ENCODE measurements at regions of chr2 and their contacts with region 1.

Region 1: GRCh38 chr2:31333527-31334183 is 80.9 kb downstream of the XDH start:
- DNase-seq: peak; percentile 62 to 69 (median 62)
- ATAC-seq: peak; percentile 91
- H3K4me3 ChIP-seq: no peak overlapping the region
- H3K27ac ChIP-seq: no peak overlapping the region
- H3K4me1 ChIP-seq: no peaks in the 10 kb centered on the region
- H3K27me3 ChIP-seq: peaks cover 2 to 18% of the 10 kb centered on the region in 2 experiments; a peak in 3 of 5 replicates
- CTCF ChIP-seq: peak; percentile 87 to 89 (median 88)
- EP300 ChIP-seq: no peak
- POLR2A ChIP-seq: no peak
- RAD21 ChIP-seq: peak; percentile 75 to 88

Region 2: GRCh38 chr2:30165050-30165520 is 1168.6 kb before region 1 on chr2:
- CTCF ChIA-PET with region 1: interaction called, 3 read pairs
- POLR2A ChIA-PET with region 1: no interaction called
- in situ Hi-C with region 1: loop called (anchors 25 kb)
- intact Hi-C with region 1: no loop called
- DNase-seq: peak; percentile 88 to 90 (median 90)
- ATAC-seq: peak; percentile 100
- H3K4me3 ChIP-seq: no peak overlapping the region
- H3K27ac ChIP-seq: no peak overlapping the region
- H3K4me1 ChIP-seq: no peaks in the 10 kb centered on the region
- H3K27me3 ChIP-seq: no peaks in the 10 kb centered on the region; a peak in 1 of 5 replicates
- CTCF ChIP-seq: peak; percentile 94 to 99 (median 98)
- EP300 ChIP-seq: 0 out of 2 replicates have a peak, but pooled peaks have one; percentile 32
- POLR2A ChIP-seq: no peak
- RAD21 ChIP-seq: peak; percentile 90 to 92

Region 3: DNA sequence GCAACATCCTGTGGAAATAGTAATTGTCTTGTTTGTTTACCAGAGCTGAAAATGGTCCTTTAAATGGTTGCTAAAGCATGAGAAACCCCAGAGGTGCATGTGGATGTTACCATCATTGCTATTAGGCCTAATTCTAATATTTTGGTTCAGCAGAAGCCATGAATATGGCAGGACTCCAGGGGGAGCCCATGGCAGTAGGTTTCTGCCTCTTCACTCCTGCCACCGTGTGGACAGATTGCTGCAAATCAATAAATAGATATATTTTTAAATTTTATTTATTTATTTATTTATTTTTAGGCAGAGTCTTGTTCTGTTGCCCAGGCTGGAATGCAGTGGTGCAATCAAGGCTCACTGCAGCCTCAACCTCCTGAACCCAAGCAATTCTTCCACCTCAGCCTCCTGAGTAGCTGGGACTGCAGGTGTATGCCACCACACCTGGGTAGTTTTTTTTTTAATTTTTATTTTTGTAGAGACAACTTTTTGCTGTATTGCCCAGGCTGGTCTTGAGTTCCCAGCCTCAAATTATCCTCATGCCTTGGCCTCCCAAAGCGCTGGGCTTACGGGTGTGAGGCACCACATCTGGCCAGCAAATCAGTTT is 471.5 kb before region 1 on chr2:
- CTCF ChIA-PET with region 1: interaction called, 6 read pairs
- POLR2A ChIA-PET with region 1: no interaction called
- in situ Hi-C with region 1: no loop called
- intact Hi-C with region 1: loop called (anchors 10 kb)
- DNase-seq: peak; percentile 41 to 72 (median 51)
- ATAC-seq: peak; percentile 81
- H3K4me3 ChIP-seq: no peak overlapping the region
- H3K27ac ChIP-seq: no peak overlapping the region
- H3K4me1 ChIP-seq: no peaks in the 10 kb centered on the region
- H3K27me3 ChIP-seq: peaks cover 2 to 5% of the 10 kb centered on the region in 2 experiments; a peak in 3 of 5 replicates
- CTCF ChIP-seq: peak; percentile 63 to 99 (median 99)
- EP300 ChIP-seq: no peak
- POLR2A ChIP-seq: no peak
- RAD21 ChIP-seq: peak; percentile 63 to 67

Region 4: DNA sequence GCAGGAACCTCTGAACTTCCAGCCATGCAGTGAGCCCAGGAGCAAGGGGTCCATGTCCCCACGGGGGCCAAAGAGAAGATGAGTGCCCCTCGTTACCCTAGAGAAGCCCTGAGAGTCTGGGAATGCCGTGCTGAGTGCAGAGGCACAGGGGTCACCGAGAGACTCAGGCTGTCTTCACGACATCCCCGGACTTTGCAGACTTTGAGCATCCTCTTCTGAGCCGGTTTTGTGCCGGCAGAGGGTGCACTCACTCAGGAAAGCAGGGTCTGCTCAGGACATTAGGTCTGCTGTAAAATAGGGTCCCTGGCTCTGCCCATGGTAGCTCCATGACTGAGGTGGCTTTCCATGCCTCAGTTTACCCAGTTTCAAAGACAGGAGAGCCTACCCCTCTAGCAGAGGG is 266.4 kb before region 1 on chr2:
- CTCF ChIA-PET with region 1: no interaction called
- POLR2A ChIA-PET with region 1: no interaction called
- in situ Hi-C with region 1: no loop called
- intact Hi-C with region 1: loop called (anchors 10 kb)
- DNase-seq: peak in 3 of 4 experiments; percentile 12 to 18 (median 17)
- ATAC-seq: peak; percentile 78
- H3K4me3 ChIP-seq: no peak overlapping the region
- H3K27ac ChIP-seq: no peak overlapping the region
- H3K4me1 ChIP-seq: no peaks in the 10 kb centered on the region
- H3K27me3 ChIP-seq: no peaks in the 10 kb centered on the region; a peak in 1 of 5 replicates
- CTCF ChIP-seq: peak; percentile 40 to 49 (median 43)
- EP300 ChIP-seq: no peak
- POLR2A ChIP-seq: no peak
- RAD21 ChIP-seq: peak in 1 of 2 experiments; percentile 28; a peak in 1 of 4 replicates

Region 5: DNA sequence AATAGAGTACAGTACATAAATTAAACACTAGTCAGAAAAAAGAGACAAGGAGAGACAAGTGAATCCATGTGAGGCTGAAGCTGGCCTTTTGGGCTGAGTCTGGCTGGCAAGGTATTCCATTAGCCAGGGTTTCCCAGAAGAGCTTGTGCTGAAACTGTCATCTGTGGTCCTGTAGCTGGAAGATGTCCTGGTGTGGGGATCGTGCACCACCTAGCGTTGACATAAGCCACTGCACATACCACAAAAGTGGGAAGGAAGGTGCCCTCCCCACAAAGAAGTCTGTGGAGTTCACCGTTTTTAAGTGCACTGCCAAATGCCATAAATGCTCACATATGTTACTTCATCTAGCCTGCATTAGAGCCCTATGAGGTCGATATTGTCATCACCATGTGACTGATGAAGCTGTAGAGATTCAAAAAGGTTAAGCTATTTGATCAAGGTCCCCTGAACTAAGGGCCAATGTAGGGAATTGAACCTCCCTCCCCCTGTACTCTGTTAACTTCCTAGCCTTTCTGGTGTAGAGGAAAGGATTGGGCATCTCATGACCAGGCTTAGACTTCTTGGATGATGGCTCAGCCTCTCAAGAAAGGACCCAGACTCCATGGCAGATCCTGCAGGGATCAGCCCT is 163.5 kb before region 1 on chr2:
- CTCF ChIA-PET with region 1: no interaction called
- POLR2A ChIA-PET with region 1: no interaction called
- in situ Hi-C with region 1: no loop called
- intact Hi-C with region 1: loop called (anchors 10 kb)
- DNase-seq: peak; percentile 69 to 77 (median 74)
- ATAC-seq: peak; percentile 98
- H3K4me3 ChIP-seq: no peak overlapping the region
- H3K27ac ChIP-seq: no peak overlapping the region
- H3K4me1 ChIP-seq: no peaks in the 10 kb centered on the region
- H3K27me3 ChIP-seq: peaks cover 0 to 3% of the 10 kb centered on the region in 2 experiments; a peak in 1 of 5 replicates
- CTCF ChIP-seq: peak; percentile 88 to 90 (median 88)
- EP300 ChIP-seq: no peak
- POLR2A ChIP-seq: no peak
- RAD21 ChIP-seq: peak; percentile 75 to 86

Region 6: DNA sequence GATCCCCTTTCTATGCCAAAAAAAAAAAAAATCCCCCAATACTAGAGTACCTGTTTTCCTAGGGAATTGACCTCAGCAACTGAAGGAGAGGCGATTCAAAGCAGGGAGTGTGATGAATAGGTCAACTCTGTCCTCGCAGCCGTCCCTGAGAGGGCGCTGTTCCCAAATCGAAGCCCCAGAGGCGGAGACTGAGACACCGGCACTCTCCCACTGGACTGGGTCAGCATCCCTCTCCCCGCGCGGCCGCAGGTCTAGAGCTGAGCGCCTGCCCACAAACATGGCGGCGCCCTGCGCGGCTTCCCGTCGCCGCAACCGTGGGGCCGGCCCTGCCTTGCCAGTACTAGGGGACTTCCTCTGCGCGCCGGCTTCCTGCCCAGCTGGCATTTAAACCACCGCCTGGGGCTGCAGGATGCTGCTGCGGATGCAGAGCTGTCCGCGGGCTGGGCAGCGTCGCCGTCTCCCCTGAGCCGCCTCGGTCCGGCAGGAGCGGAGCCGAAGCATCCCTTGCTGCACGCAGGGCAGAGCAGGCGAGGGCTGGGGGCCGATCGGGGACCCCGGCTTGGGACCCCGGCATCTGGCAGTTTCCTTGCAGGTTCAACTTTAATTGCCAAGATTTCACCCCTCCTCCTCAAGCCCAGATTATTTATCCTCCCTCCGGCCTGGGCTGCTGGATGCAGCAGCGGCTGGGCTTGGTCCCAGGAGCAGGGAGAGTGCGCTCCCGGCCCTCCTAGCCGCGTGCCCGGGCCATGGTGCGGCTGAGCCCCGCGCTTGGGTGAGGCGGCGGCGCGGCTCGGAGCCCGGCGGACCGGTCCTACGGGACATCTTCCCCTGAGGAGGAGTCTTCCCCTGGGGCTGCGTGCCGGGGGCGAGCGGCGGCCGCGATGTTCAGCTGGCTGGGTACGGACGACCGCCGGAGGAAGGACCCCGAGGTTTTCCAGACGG is 99.6 kb before region 1 on chr2 and contains the start of gene EHD3:
- CTCF ChIA-PET with region 1: no interaction called
- POLR2A ChIA-PET with region 1: no interaction called
- in situ Hi-C with region 1: no loop called
- intact Hi-C with region 1: loop called (anchors 10 kb)
- DNase-seq: peak; percentile 66 to 77 (median 70)
- ATAC-seq: peak; percentile 100
- H3K4me3 ChIP-seq: no peak within 1 kb of the TSS; the same call in 1 of the 2 replicates
- H3K27ac ChIP-seq: no peak within 1 kb of the TSS
- H3K4me1 ChIP-seq: peaks cover 0 to 11% of the 10 kb centered on the region in 2 experiments; a peak in 3 of 5 replicates
- H3K27me3 ChIP-seq: peaks cover 3 to 32% of the 10 kb centered on the region in 2 experiments; a peak in 2 of 5 replicates
- CTCF ChIP-seq: peak; percentile 50 to 62 (median 57)
- EP300 ChIP-seq: no peak
- POLR2A ChIP-seq: no peak
- RAD21 ChIP-seq: 0 out of 4 replicates have a peak, but pooled peaks of 1 of the 2 experiments have one; percentile 18
- polyA plus RNA-seq, gene EHD3: not detected

Region 7: DNA sequence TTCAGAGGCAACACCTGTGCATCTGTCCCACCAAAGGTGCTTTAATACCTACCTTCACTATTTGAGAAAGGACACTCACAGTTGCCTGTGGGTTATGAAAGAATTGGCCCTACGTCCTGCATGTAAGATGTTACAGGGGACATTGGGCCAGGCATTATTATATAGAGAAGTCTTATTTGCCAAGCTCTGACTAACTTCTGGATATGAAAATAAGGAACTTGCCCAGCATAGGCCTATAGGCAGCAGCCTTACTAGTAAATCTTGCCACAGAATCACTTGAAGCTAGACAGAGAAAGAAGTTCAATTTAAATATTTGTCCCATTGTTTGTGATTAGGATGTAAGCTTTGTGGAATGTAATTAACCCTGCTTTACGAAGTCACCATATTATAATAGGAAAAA is 889.3 kb after region 1 on chr2:
- CTCF ChIA-PET with region 1: no interaction called
- POLR2A ChIA-PET with region 1: no interaction called
- in situ Hi-C with region 1: no loop called
- intact Hi-C with region 1: no loop called
- DNase-seq: no peak
- ATAC-seq: no peak
- H3K4me3 ChIP-seq: no peak overlapping the region
- H3K27ac ChIP-seq: no peak overlapping the region
- H3K4me1 ChIP-seq: no peaks in the 10 kb centered on the region
- H3K27me3 ChIP-seq: no peaks in the 10 kb centered on the region
- CTCF ChIP-seq: no peak
- EP300 ChIP-seq: no peak
- POLR2A ChIP-seq: no peak
- RAD21 ChIP-seq: no peak